GM10248 (cell line): ENCODE measurements at regions of chr18 and their contacts with region 1.

Region 1: DNA sequence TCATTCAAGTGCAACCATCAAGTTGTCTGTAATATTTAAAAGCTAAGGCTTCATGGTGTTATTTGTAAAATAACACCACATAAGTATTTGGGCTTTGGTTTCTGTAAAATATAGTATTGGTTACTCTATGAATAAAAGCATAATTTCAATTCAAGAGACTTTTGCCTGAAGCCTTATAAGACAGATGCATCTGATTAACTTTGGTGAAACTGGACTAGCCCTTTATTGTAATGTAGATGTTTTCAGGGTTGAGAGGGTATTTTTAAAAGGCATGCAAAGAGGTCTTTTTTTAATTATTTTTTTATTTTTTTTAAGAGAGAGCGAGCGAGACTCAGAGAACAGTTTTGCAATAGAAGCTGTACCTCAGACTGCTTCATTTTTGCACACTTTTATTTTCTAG is 66.5 kb downstream of the ASXL3 start:
- DNase-seq: no peak
- CTCF ChIP-seq: no peak

Region 2: DNA sequence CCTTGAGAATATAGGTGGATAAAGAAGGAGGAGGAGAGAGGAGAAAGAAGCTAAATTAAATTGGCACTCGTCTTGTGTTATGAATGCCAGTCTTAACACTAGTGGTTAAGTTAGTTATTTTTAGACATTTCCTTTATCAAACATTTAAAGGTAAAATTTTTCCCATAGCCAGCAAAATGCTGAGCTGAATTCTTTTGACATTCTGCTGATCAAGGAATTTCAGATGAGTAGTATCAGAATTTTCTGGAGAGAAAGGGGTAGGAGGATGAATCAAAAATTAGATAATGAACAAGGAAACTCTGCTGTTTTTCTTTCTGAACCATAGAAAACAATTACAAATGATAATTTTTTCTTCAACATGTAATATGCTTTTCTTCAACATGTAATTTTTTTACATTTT is 14.0 kb before region 1 on chr18:
- CTCF ChIA-PET with region 1: interaction called, 10 read pairs
- POLR2A ChIA-PET with region 1: no interaction called
- DNase-seq: no peak
- CTCF ChIP-seq: no peak